Natural killer cell (primary cell): ENCODE measurements at regions of chr2 and their contacts with region 1.

Region 1: DNA sequence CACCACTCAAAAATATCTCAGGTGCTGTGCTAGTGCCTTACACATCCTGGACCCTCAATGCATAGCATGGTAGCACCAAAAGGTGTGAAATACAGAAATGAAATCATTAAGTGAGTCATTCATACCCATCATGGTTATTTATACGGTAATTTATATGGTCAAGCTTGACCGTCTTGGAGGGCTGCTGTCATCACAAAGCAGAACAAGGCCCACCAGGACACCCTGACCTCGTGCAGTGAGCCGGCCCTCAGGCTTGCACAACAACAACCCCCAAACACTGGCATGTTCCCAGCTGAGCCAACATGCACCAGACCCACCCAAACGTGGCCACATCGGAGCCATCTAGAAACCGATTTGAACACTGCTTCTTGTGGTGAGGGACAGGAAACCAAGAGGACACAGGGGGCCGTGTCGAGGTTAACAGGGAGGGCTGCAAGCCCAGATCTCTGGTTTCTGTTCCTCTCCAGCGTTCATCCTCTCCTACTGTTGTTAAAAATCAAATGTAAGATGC is 378.5 kb upstream of the ID2 start:
- DNase-seq: peak; percentile 77 to 82
- ATAC-seq: peak; percentile 55 to 82 (median 79)
- H3K4me3 ChIP-seq: no peak overlapping the region
- H3K4me3 Mint-ChIP-seq: peak overlapping the region; percentile 83
- H3K27ac ChIP-seq: peak overlapping the region; percentile 77
- H3K27ac Mint-ChIP-seq: peak overlapping the region; percentile 91 to 99
- H3K4me1 ChIP-seq: peaks cover 91% of the 10 kb centered on the region
- H3K4me1 Mint-ChIP-seq: peaks cover 93 to 94% of the 10 kb centered on the region in 2 donors
- H3K27me3 ChIP-seq: no peaks in the 10 kb centered on the region
- H3K27me3 Mint-ChIP-seq: no peaks in the 10 kb centered on the region
- CTCF ChIP-seq: no peak

Region 2: GRCh38 chr2:8324164-8324856 is 20.9 kb after region 1 on chr2:
- intact Hi-C with region 1: no loop called
- DNase-seq: no peak
- ATAC-seq: peak; percentile 49 to 68 (median 67)
- H3K4me3 ChIP-seq: peak overlapping the region; percentile 9
- H3K4me3 Mint-ChIP-seq: peak overlapping the region; percentile 88
- H3K27ac ChIP-seq: peak overlapping the region; percentile 66
- H3K27ac Mint-ChIP-seq: peak overlapping the region; percentile 94 to 99
- H3K4me1 ChIP-seq: peaks cover 66% of the 10 kb centered on the region
- H3K4me1 Mint-ChIP-seq: peaks cover 90 to 96% of the 10 kb centered on the region in 2 donors
- H3K27me3 ChIP-seq: no peaks in the 10 kb centered on the region
- H3K27me3 Mint-ChIP-seq: no peaks in the 10 kb centered on the region
- CTCF ChIP-seq: no peak

Region 3: GRCh38 chr2:8334866-8335325 is 31.5 kb after region 1 on chr2:
- intact Hi-C with region 1: loop called (anchors 2 kb)
- DNase-seq: peak in 1 of 2 donors; percentile 39
- ATAC-seq: peak; percentile 71 to 81 (median 72)
- H3K4me3 ChIP-seq: no peak overlapping the region
- H3K4me3 Mint-ChIP-seq: peak overlapping the region; percentile 80
- H3K27ac ChIP-seq: peak overlapping the region; percentile 80
- H3K27ac Mint-ChIP-seq: peak overlapping the region; percentile 87 to 94
- H3K4me1 ChIP-seq: peaks cover 64% of the 10 kb centered on the region
- H3K4me1 Mint-ChIP-seq: peaks cover 70 to 71% of the 10 kb centered on the region in 2 donors
- H3K27me3 ChIP-seq: no peaks in the 10 kb centered on the region
- H3K27me3 Mint-ChIP-seq: no peaks in the 10 kb centered on the region
- CTCF ChIP-seq: no peak

Region 4: DNA sequence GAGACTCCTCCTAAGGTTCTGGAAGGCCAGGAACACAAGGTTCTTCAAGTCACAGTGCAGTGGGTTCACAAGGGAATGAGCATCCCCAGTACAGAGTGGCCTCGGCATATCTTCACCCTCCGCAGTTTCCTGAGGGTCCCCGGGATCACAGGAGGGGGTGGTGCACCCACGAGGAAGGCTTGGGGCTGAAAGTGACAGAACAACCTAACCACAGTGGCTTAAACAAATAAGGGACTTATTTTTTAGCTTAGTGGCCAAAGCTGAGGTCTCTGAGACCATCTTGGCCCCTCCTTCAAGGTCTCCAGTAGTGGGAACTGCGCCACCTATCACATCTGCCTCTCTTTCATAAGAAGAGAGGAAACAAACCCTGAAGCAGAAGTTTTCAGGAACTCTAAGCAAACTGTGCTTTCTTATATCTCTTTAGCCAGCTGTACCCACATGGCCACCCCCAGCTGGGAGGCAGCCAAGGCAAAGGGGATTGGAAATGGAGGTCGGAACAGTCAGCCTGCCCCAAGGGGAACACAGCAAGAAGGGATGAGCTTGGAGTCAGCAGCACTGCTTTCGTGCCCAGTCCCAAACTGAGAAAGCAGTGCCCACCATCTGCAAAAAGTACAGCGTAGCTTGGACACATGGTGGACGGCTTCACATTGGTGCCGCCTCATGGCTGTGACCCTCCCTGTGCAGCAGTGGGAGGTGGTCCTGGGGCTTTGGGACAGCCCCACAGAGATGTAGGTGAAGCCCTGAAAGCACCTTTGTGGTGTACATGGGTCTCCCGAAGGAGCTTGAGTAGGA is 118.5 kb after region 1 on chr2:
- intact Hi-C with region 1: loop called (anchors 5 kb)
- DNase-seq: no peak
- ATAC-seq: peak in 1 of 3 donors; percentile 37
- H3K4me3 ChIP-seq: peak overlapping the region; percentile 6
- H3K4me3 Mint-ChIP-seq: peak overlapping the region; percentile 90
- H3K27ac ChIP-seq: peak overlapping the region; percentile 41
- H3K27ac Mint-ChIP-seq: peak overlapping the region; percentile 85 to 95
- H3K4me1 ChIP-seq: peaks cover 65% of the 10 kb centered on the region
- H3K4me1 Mint-ChIP-seq: peaks cover 82 to 91% of the 10 kb centered on the region in 2 donors
- H3K27me3 ChIP-seq: no peaks in the 10 kb centered on the region
- H3K27me3 Mint-ChIP-seq: no peaks in the 10 kb centered on the region
- CTCF ChIP-seq: no peak

Region 5: DNA sequence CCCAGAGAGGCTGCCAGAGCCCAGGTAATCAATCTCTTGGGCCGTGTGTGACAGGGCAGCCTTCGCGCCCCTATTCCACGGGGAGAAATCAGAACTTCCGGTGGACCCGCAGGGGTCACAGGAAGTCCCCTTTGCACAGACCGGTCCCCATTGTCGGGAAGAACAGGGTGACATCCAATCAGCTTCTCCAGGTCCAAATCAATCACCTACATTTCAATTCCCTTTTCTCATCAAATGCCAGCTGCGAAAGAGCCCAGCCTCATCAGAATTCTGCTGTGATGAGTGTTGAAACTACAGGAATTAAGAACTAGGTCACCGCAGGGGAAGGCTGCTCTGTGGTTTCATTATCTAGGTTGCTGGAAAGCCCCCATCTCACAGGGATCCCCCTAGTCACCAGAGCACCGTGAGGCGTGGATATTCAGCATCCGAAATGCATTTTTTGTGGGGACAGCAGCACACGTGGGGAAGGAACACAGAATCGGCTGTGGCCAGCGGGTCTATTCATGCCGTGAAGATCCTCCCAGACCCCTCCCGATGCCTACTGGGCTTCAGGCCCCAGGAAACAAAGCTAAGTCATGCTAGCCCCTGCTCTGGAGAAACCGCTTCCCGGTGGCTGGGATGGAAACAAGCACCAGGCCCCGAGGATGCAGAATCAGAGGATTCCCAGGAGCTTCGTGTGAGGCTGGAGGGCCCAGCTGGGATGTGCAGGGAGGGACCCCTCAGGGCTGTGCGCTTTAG is 184.8 kb after region 1 on chr2:
- intact Hi-C with region 1: loop called (anchors 5 kb)
- DNase-seq: peak; percentile 71 to 93
- ATAC-seq: peak; percentile 81 to 91 (median 91)
- H3K4me3 ChIP-seq: peak overlapping the region; percentile 30
- H3K4me3 Mint-ChIP-seq: peak overlapping the region; percentile 98
- H3K27ac ChIP-seq: peak overlapping the region; percentile 95
- H3K27ac Mint-ChIP-seq: peak overlapping the region; percentile 97 to 100
- H3K4me1 ChIP-seq: peaks cover 59% of the 10 kb centered on the region
- H3K4me1 Mint-ChIP-seq: peaks cover 68 to 69% of the 10 kb centered on the region in 2 donors
- H3K27me3 ChIP-seq: no peaks in the 10 kb centered on the region
- H3K27me3 Mint-ChIP-seq: no peaks in the 10 kb centered on the region
- CTCF ChIP-seq: no peak

Region 6: DNA sequence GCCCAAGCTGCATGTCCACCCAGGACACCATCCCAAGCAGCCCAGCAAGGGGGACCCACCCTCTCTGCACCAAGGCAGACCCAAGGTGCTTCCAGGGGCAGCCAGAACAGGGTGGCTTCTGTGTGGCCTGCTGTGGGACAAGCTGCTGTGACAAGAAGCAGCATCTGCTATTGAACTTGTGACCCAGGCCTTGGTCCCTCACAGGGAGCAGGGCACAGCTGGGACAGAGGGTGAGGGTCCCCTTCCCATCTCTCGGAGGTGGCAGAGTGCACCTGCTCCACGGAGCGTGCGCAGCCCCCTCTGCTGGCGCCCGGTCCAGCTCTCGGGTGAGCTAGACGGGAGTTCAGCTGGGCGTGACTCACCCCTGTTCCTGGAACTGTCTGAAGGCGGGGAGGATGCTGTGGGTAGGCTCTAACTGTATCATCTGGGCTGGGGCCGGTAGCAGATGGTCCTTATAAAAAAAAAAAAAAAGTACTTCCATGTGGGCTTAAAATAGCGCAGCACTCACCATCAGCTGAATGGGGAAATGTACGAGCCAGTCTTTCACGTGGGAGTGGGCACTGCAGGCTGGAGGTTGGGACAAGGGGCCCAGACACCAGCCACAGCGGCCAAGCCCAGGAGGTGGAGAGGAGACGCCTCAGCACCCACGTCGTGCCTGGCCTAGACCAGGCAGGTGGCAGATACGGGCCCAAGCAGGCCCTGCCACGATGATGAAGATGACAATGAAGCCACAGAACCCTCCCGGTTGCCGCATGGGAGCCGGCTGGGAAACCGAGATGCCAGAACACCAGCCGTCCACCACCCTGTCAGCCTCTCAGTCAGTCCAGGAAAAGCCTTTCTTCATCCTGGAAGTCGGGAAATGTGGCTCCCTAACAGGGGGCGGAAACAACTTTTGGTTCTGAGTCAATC is 241.7 kb after region 1 on chr2:
- intact Hi-C with region 1: loop called (anchors 5 kb)
- DNase-seq: peak; percentile 71 to 88
- ATAC-seq: peak; percentile 67 to 78 (median 69)
- H3K4me3 ChIP-seq: no peak overlapping the region
- H3K4me3 Mint-ChIP-seq: peak overlapping the region; percentile 50
- H3K27ac ChIP-seq: peak overlapping the region; percentile 87
- H3K27ac Mint-ChIP-seq: peak overlapping the region; percentile 99
- H3K4me1 ChIP-seq: peaks cover 74% of the 10 kb centered on the region
- H3K4me1 Mint-ChIP-seq: peaks cover 73 to 82% of the 10 kb centered on the region in 2 donors
- H3K27me3 ChIP-seq: no peaks in the 10 kb centered on the region
- H3K27me3 Mint-ChIP-seq: no peaks in the 10 kb centered on the region
- CTCF ChIP-seq: peak; percentile 45

Region 7: DNA sequence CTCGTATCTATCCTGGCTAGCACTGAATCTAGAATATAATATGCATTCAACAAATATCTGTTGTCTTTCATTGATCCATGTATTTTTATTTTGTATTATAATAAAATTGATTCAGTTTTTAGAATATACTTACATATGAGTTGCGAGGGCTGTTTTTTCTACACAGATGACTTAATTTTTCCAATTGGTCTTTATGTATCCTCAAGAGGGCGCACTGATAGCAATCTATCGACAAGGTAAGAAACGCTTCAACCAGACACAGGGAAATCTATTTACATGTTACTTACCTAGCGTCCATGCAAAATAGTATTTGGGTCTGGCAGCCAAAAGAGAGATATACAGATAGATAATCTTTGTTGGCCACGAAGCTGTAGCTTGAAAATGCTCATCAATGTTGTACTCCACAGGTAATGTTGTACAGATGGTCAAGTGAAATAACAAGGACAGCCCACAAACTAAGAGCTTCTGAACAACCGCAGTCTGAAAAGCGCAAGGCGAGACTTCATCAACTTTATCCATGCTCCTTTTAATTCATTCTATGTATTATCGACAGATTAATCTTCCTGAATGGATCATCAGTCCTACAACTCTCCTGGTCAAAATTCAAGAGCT is 569.5 kb after region 1 on chr2:
- intact Hi-C with region 1: no loop called
- DNase-seq: peak in 1 of 2 donors; percentile 37
- ATAC-seq: no peak
- H3K4me3 ChIP-seq: no peak overlapping the region
- H3K4me3 Mint-ChIP-seq: no peak overlapping the region
- H3K27ac ChIP-seq: no peak overlapping the region
- H3K27ac Mint-ChIP-seq: no peak overlapping the region
- H3K4me1 ChIP-seq: no peaks in the 10 kb centered on the region
- H3K4me1 Mint-ChIP-seq: no peaks in the 10 kb centered on the region
- H3K27me3 ChIP-seq: no peaks in the 10 kb centered on the region
- H3K27me3 Mint-ChIP-seq: no peaks in the 10 kb centered on the region
- CTCF ChIP-seq: peak; percentile 20